ENCODE measurements at regions of chr10 and their contacts with region 1.

Region 1: GRCh38 chr10:73730153-73730906 is 13.8 kb upstream of the SEC24C start:
- DNase-seq: peak; percentile 93
- H3K4me3 Mint-ChIP-seq: peak overlapping the region; percentile 92
- H3K27ac Mint-ChIP-seq: peak overlapping the region; percentile 96
- H3K4me1 Mint-ChIP-seq: peaks cover 14% of the 10 kb centered on the region
- H3K27me3 Mint-ChIP-seq: no peaks in the 10 kb centered on the region

Region 2: DNA sequence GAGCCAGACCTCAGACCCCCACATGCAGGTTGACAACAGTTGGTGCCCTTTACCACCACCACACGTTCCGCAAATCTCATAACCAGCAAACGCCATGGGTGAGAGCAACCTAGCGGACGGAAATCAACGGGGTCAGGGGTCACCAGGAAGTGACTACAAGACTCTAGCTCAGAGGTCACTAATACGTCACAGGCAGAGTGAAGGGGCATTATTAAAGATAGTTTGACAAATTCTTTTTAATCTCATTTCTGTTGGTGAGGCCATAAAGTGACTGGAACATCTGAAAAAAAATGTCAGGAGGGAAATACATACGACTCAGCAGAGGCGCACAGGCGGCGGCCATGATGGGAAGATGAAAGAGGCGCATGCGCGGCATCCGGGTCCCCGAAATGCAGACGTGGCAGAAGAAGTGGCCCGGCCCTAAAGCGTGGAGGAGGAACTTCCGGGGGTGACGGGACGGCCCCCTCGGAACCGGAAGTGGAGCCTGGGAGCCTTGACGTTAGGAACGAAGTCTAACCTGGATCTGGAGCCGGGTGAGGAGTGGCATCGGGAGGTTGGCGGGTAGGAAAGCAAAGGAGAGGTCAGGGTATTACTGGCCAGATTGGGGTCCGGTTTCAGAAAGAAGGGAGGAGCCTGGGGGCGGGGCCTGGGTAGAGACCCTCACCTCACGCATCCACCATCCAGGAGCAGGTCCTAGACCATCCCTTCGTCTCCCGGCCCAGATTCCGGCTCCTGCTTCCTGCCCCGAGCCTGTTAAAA is 13.8 kb after region 1 on chr10 and contains the start of gene SEC24C:
- intact Hi-C with region 1: loop called (anchors 1 kb)
- DNase-seq: peak; percentile 93
- H3K4me3 Mint-ChIP-seq: peak within 1 kb of the TSS; percentile 97
- H3K27ac Mint-ChIP-seq: peak within 1 kb of the TSS; percentile 100
- H3K4me1 Mint-ChIP-seq: peaks cover 27% of the 10 kb centered on the region
- H3K27me3 Mint-ChIP-seq: no peaks in the 10 kb centered on the region
- total RNA-seq, gene SEC24C: 119 TPM in 2 replicates